Right ventricle myocardium inferior (tissue), 1 donor: ENCODE measurements at regions of chr11 and their contacts with region 1.

Region 1: GRCh38 chr11:11813288-11813962 is 28.3 kb upstream of the USP47 start:
- DNase-seq: no peak
- ATAC-seq: peak; percentile 96

Region 2: DNA sequence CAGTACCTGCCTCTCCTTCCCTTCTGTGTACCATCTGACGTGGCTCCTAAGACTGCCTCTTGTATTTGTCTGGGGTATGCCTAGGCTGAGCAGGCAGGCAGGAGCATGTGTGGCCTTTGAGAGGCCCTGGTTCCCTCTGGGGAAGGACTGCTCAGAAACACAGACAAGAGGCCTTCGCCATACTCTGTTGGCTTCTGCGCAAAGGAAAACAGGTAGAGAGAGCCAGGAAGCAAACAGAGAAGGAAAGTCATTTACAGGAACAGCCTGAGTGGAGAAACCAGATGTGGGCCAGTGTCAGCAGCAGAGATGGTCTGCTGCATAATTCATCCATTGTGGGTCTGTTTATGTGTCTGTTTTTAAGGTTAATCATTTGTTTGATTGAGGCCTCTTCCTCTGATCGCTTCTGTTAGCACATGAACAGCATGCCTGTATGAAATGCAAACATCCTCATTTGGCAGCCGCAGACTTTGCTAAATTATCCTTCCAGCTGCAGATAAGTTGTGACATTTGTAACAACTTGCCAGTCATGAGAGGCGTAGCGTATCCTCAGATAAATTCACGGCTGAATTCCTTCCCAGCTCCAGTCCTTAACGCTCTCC is 311.1 kb before region 1 on chr11:
- intact Hi-C with region 1: no loop called
- DNase-seq: no peak
- ATAC-seq: peak; percentile 28

Region 3: DNA sequence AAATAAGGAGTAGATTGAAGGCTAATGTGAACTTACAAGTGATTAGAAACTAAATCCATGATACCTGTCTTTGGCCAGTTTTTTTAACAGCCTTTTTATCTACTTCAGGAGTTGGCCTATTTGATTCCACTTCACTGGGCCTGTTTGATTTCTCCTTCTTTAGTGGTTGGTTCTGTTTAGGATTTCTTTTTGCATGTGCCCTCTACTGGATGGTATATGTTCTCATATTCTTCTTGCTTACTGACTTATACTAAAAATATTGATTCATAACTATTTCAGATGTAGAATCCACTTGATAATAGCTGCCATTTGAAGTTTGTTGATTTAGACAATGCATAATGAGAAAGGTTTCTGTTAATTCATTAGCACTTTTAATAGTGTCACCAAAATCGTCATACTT is 82.2 kb after region 1 on chr11:
- intact Hi-C with region 1: loop called (anchors 5 kb)
- DNase-seq: no peak
- ATAC-seq: no peak